Endothelial cell of umbilical vein (primary cell): ENCODE measurements at regions of chr10 and their contacts with region 1.

Region 1: DNA sequence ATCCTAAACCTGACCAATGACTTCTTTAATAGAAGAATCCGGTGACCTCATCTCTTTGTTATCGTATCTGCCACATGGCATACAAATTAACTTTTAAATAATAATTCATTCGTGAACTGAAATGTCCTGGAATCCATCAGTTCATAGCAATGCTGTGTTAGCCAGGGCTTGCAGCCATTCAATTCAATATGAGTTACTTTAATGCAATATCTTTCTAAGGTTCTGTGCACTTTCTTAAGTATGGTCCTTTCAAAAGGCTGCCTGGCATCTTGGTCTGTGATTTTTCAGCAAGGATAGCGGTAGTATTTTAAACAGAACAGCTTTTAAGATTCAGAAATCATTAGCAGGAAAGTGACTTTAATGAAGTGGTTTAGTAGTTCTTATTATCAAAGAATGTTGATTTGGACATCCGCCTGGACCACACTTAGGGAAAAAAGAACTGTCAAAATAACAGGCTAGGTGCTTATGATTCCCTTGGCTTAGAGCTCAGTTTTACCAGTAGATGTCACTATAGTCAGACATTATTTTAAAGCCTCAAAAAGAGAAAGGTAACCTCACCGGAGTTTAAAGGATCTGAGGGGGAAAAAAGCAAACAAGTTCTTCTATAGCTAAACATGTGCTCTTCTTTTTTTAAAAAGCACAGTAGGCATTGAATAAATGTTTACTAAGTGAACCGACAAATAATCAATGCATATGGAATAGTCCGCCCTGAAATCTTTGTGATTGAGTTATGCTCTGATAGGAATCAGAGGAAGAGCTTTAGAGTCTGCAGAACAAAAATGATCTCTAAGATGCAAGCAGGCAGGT is 22.7 kb downstream of the SLC35G1 start:
- DNase-seq: peak; percentile 31
- H3K4me3 ChIP-seq: no peak overlapping the region
- H3K27ac ChIP-seq: no peak overlapping the region
- H3K4me1 ChIP-seq: peaks cover 7% of the 10 kb centered on the region
- H3K27me3 ChIP-seq: no peaks in the 10 kb centered on the region
- CTCF ChIP-seq: peak in 1 of 2 donors; percentile 33
- POLR2A ChIP-seq: no peak

Region 2: GRCh38 chr10:93893646-93894515 is 22.6 kb before region 1 on chr10 and contains the start of gene SLC35G1:
- CTCF ChIA-PET with region 1: interaction called, 18 read pairs
- POLR2A ChIA-PET with region 1: no interaction called
- dilution Hi-C with region 1: no loop called
- intact Hi-C with region 1: no loop called
- DNase-seq: peak; percentile 81
- H3K4me3 ChIP-seq: peak within 1 kb of the TSS; percentile 55 to 77 (median 65)
- H3K27ac ChIP-seq: peak within 1 kb of the TSS; percentile 16
- H3K4me1 ChIP-seq: peaks cover 7% of the 10 kb centered on the region
- H3K27me3 ChIP-seq: peaks cover 5 to 6% of the 10 kb centered on the region in 2 experiments
- CTCF ChIP-seq: no peak
- POLR2A ChIP-seq: peak; percentile 97
- total RNA-seq, gene SLC35G1: 3.3 and 4.1 TPM in 2 replicates